T-cell (primary cell): ENCODE measurements at regions of chr5 and their contacts with region 1.

Region 1: GRCh38 chr5:151028717-151029116 is 8.3 kb downstream of the GPX3 start:
- DNase-seq: no peak
- ATAC-seq: no peak
- H3K4me3 ChIP-seq: no peak overlapping the region
- H3K4me3 Mint-ChIP-seq: no peak overlapping the region
- H3K27ac ChIP-seq: no peak overlapping the region
- H3K27ac Mint-ChIP-seq: no peak overlapping the region
- H3K4me1 ChIP-seq: no peaks in the 10 kb centered on the region
- H3K4me1 Mint-ChIP-seq: peaks cover 3 to 7% (median 6%) of the 10 kb centered on the region in 3 donors
- H3K27me3 ChIP-seq: no peaks in the 10 kb centered on the region
- H3K27me3 Mint-ChIP-seq: no peaks in the 10 kb centered on the region

Region 2: DNA sequence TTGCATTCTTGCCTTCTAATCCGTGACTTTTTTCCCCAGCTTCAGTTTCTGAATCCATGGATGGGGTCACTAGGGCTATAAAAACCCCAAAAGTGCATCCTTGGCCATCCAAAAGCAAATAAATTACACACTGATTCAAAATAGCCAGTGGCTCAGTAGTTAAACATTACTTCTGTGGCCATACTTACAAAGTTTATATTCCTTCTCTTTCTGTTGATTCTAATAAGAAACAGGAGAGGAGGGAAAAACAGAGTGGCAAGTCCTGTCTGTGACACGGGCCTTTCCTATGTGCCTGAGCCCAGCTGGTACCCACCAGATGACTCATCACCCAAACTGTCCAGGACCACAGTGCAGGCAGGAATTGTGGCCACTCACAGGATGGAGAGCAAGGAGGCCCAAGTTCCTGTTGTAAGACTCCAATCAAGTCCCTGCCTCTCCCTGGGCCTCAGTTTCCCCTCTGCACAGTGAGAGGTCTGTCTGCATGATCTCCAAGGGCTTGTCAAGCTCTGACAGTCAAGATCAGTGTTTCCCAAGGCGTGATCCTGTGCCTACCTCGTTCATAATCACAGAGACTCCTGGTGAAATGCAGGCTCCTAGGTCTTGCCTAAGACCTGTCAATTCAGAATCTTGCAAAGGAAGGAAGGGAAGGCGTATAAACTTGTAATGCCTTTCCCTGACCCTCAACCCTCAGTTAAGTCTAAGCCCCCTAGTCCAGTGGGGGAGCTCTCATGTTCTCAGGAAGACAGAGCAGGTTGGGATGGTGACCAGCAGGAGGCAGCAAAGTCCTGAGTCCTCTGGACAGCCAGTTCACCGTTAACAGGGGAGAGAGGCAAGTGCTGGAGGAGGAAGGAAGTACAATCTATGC is 22.6 kb after region 1 on chr5:
- CTCF ChIA-PET with region 1: interaction called, 3 to 4 read pairs
- POLR2A ChIA-PET with region 1: interaction called in 1 of 2 experiments, 11 read pairs
- DNase-seq: peak; percentile 37 to 84 (median 63)
- ATAC-seq: peak; percentile 62 to 80 (median 76)
- H3K4me3 ChIP-seq: no peak overlapping the region
- H3K4me3 Mint-ChIP-seq: no peak overlapping the region
- H3K27ac ChIP-seq: no peak overlapping the region
- H3K27ac Mint-ChIP-seq: peak overlapping the region in 1 of 2 donors; percentile 46
- H3K4me1 ChIP-seq: no peaks in the 10 kb centered on the region
- H3K4me1 Mint-ChIP-seq: peaks cover 10 to 13% (median 13%) of the 10 kb centered on the region in 3 donors
- H3K27me3 ChIP-seq: no peaks in the 10 kb centered on the region
- H3K27me3 Mint-ChIP-seq: no peaks in the 10 kb centered on the region

Region 3: GRCh38 chr5:151239237-151239861 is 210.6 kb after region 1 on chr5:
- CTCF ChIA-PET with region 1: no interaction called
- POLR2A ChIA-PET with region 1: no interaction called
- DNase-seq: peak in 26 of 35 experiments; percentile 13 to 66 (median 42)
- ATAC-seq: peak; percentile 53 to 79 (median 65)
- H3K4me3 ChIP-seq: no peak overlapping the region
- H3K4me3 Mint-ChIP-seq: peak overlapping the region in 1 of 3 donors; percentile 4
- H3K27ac ChIP-seq: no peak overlapping the region
- H3K27ac Mint-ChIP-seq: peak overlapping the region in 1 of 2 donors; percentile 16
- H3K4me1 ChIP-seq: peaks cover 11 to 30% of the 10 kb centered on the region in 2 experiments
- H3K4me1 Mint-ChIP-seq: peaks cover 23 to 35% (median 32%) of the 10 kb centered on the region in 3 donors
- H3K27me3 ChIP-seq: peaks cover 0 to 3% of the 10 kb centered on the region in 2 experiments
- H3K27me3 Mint-ChIP-seq: no peaks in the 10 kb centered on the region